Activated B cell treated with CpG ODN at 0.5 μM for 24 hours (primary cell): ENCODE measurements at regions of chr13 and their contacts with region 1.

Region 1: DNA sequence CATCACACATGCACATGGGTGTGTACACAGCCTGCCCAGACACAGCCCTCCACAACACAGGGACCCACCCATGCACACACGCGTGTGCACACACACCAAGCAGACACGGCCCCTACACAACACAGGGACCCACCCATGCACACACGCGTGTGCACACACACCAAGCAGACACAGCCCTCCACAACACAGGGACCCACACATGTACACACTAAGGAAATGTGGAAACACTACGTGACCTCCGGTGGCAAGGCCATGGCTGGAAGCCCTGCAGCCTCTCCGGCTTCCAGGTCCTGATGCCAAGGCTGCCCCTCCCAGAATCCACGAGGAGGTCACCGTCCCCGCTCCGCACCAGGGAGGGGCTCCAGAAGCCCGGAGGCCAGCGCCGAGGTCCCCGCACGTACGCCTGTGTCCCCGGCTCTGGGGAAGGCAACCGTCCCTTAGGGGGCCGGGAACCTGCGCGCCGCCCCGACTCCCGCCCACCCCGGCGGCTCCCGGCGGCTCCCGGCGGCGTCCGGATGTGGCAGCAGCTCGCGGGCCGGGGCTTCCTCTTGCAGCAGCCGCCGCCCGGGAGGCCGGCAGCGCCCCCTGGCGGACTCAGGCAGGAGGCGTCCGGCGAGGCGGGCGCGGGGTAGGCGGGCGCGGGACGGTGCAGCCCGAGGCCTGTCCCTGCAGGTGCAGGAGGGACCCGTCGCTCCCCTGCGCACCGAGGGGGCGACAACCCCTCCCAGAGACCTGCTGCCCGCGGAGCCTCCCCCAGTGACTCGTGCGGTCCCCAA is 29.8 kb upstream of the GRTP1 start:
- DNase-seq: peak; percentile 88
- ATAC-seq: peak; percentile 98
- H3K4me3 Mint-ChIP-seq: peak overlapping the region; percentile 84
- H3K27ac Mint-ChIP-seq: peak overlapping the region; percentile 50
- H3K4me1 Mint-ChIP-seq: peaks cover 8% of the 10 kb centered on the region
- H3K27me3 Mint-ChIP-seq: no peaks in the 10 kb centered on the region
- CTCF ChIP-seq: no peak

Region 2: GRCh38 chr13:111474136-111475002 is 1919.4 kb before region 1 on chr13:
- CTCF ChIA-PET with region 1: no interaction called
- POLR2A ChIA-PET with region 1: no interaction called
- intact Hi-C with region 1: loop called (anchors 10 kb)
- DNase-seq: no peak
- ATAC-seq: no peak
- H3K4me3 Mint-ChIP-seq: no peak overlapping the region
- H3K27ac Mint-ChIP-seq: no peak overlapping the region
- H3K4me1 Mint-ChIP-seq: no peaks in the 10 kb centered on the region
- H3K27me3 Mint-ChIP-seq: no peaks in the 10 kb centered on the region
- CTCF ChIP-seq: no peak

Region 3: GRCh38 chr13:112447761-112448603 is 945.8 kb before region 1 on chr13:
- CTCF ChIA-PET with region 1: no interaction called
- POLR2A ChIA-PET with region 1: no interaction called
- intact Hi-C with region 1: no loop called
- DNase-seq: no peak
- ATAC-seq: no peak
- H3K4me3 Mint-ChIP-seq: no peak overlapping the region
- H3K27ac Mint-ChIP-seq: no peak overlapping the region
- H3K4me1 Mint-ChIP-seq: no peaks in the 10 kb centered on the region
- H3K27me3 Mint-ChIP-seq: peaks cover 5% of the 10 kb centered on the region
- CTCF ChIP-seq: no peak

Region 4: DNA sequence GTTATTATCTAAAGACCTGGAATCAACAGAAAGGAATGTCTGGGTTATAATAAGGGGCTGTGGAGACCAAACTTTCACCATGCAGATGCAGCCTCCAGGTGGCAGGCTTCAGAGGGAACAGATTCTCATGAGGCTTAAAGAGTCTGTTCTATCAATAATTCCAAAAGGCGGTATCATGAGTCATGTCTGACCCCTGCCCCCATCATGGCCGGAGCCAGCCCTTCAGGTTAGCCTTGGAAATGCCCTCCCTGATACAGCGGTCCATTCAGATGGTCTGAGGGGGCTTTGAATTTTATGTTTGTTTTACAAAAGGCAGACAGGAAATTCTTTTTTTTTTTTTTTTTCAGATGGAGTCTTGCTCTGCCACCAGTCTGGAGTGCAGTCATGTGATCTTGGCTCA is 118.4 kb before region 1 on chr13:
- CTCF ChIA-PET with region 1: interaction called, 6 read pairs
- POLR2A ChIA-PET with region 1: no interaction called
- intact Hi-C with region 1: loop called (anchors 1 kb)
- DNase-seq: no peak
- ATAC-seq: peak; percentile 40
- H3K4me3 Mint-ChIP-seq: no peak overlapping the region
- H3K27ac Mint-ChIP-seq: no peak overlapping the region
- H3K4me1 Mint-ChIP-seq: no peaks in the 10 kb centered on the region
- H3K27me3 Mint-ChIP-seq: peaks cover 2% of the 10 kb centered on the region
- CTCF ChIP-seq: no peak

Region 5: DNA sequence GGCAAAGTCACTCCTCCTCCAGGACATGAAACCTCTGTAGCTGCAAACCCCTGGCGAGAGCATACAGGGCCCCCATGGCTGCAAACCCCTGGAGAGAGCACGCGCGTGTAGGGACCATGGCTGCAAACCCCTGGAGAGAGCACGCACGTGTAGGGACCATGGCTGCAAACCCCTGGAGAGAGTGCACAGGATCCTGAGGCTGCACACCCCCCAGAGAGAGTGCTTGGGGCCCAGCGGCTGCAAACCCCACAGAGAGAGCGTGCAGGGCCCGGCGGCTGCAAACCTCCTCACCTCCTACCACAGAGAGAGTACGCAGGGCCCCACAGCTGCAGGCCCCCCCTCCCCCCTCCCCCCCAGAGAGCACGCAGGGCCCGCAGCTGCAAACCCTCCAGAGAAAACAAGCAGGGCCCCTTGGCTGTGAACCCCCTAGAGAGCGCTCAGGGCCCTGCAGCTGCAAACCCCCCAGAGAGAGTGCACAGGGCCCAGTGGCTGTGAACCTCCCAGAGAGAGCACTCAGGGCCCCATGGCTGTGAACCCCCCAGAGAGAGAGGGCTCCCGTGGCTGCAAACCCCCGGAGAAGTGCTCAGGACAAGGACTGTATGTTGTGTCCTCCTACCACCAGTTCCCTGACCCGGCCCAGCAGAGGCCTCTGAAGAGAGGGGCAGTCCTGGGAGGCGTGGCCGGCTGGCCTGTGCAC is 52.2 kb after region 1 on chr13:
- CTCF ChIA-PET with region 1: no interaction called
- POLR2A ChIA-PET with region 1: no interaction called
- intact Hi-C with region 1: loop called (anchors 1 kb)
- DNase-seq: peak; percentile 40
- ATAC-seq: peak; percentile 82
- H3K4me3 Mint-ChIP-seq: peak overlapping the region; percentile 38
- H3K27ac Mint-ChIP-seq: peak overlapping the region; percentile 59
- H3K4me1 Mint-ChIP-seq: peaks cover 30% of the 10 kb centered on the region
- H3K27me3 Mint-ChIP-seq: no peaks in the 10 kb centered on the region
- CTCF ChIP-seq: no peak

Region 6: GRCh38 chr13:113490496-113491417 is 97.0 kb after region 1 on chr13 and contains the start of gene DCUN1D2:
- CTCF ChIA-PET with region 1: no interaction called
- POLR2A ChIA-PET with region 1: no interaction called
- intact Hi-C with region 1: loop called (anchors 5 kb)
- DNase-seq: peak; percentile 91
- ATAC-seq: peak; percentile 90
- H3K4me3 Mint-ChIP-seq: peak within 1 kb of the TSS; percentile 90
- H3K27ac Mint-ChIP-seq: peak within 1 kb of the TSS; percentile 77
- H3K4me1 Mint-ChIP-seq: peaks cover 52% of the 10 kb centered on the region
- H3K27me3 Mint-ChIP-seq: no peaks in the 10 kb centered on the region
- CTCF ChIP-seq: no peak
- total RNA-seq, gene DCUN1D2: 19.8 and 26.2 TPM in 2 replicates